Activated T-helper 1 cell treated with anti-CD3 and anti-CD28 coated beads, Interleukin-12 subunit alpha, Interleukin-12 subunit beta, Interleukin-2, Interleukin-4 antibody, amounts not matched to agents 30 ng/mL and 10 ng/mL and 1 ng/mL, durations not matched to agents 14 hours and 24 hours and 36 hours (primary cell): ENCODE measurements at regions of chr9 and their contacts with region 1.

Region 1: GRCh38 chr9:132354637-132355355 is at the start of gene SETX:
- DNase-seq: peak; percentile 91
- H3K4me3 Mint-ChIP-seq: peak within 1 kb of the TSS; percentile 91
- H3K27ac Mint-ChIP-seq: peak within 1 kb of the TSS; percentile 95
- H3K4me1 Mint-ChIP-seq: peaks cover 46% of the 10 kb centered on the region
- H3K27me3 Mint-ChIP-seq: peaks cover 3% of the 10 kb centered on the region
- total RNA-seq, gene SETX: 47.4 and 49.6 TPM in 2 replicates

Region 2: DNA sequence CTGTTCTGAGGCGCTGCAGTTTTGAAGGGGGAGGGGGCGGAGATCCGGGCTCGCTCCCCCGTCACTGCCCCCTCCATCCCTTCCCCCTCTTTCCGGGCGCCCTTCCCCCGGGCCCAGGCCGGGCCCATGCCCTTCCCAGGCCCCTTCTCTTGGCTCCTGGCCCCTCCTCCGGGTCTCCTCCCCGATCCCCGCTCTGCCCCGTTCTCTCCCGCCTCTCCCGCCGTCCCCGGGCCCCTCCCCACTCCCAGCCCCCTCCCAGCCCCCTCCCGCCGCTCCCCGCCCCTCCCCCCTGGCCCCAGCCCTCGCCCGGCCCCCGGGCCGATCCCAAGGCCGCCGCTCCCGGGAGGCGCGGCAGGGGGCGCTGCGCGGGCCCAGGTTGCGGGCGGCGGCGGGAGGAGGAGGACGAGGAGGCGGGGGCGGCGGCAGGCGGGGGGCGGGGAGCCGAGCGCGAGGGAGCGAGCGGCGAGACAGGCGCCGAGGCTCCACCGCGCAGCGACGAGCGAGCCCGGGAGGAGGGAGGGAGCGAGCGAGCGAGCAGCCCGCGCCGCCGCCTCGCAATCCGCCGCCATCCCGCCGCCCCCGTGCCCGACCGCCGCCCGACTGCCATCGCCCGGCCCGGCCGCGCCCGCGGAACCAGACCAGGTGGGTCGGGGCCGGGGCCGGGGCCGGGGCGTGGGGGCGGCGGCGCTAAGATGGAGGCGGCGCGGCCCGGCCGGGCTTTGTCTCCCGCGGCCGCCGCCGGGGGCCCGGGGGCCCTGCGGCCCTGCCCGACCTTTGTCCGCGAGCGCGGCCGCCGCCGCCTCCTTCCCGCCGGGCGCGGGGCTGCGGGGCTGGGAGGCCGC is 961.0 kb before region 1 on chr9 and contains the start of gene PRRC2B:
- intact Hi-C with region 1: loop called (anchors 10 kb)
- DNase-seq: peak; percentile 76
- H3K4me3 Mint-ChIP-seq: peak within 1 kb of the TSS; percentile 89
- H3K27ac Mint-ChIP-seq: peak within 1 kb of the TSS; percentile 93
- H3K4me1 Mint-ChIP-seq: peaks cover 49% of the 10 kb centered on the region
- H3K27me3 Mint-ChIP-seq: peaks cover 21% of the 10 kb centered on the region
- total RNA-seq, gene PRRC2B: 103 and 108 TPM in 2 replicates

Region 3: DNA sequence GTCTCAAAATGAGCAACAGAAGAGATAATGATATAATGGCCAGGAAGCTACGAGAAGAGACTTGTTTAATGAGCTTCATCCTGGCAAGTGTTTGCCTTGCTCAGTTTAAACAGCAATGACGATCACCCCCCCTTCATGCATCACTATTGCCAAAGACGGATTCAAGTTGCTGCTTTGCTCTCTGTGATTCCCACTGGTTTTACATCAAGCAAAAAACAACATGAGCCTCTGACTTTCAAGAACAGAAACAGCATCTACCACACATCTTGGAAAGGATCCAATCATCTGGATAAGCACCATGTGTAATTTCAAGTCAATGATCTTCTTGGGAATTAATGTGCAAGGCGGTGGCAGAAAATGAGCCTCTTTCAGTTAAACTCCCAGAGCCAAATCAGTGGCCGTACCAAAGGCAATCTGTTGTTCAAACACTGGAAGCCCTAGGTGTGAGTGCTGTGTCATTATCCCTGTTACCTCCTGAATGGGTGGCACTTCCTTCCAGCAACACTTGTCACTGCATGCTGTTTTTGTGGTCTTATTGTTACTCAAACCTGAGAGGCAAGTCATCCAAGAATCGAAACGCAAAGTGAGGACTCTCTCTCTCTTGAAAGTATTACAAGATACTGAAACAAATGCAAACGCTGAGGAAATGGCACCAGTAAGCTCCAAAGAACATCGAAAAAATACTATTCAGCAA is 348.0 kb before region 1 on chr9:
- intact Hi-C with region 1: loop called (anchors 10 kb)
- DNase-seq: peak; percentile 50
- H3K4me3 Mint-ChIP-seq: peak overlapping the region; percentile 58
- H3K27ac Mint-ChIP-seq: peak overlapping the region; percentile 62
- H3K4me1 Mint-ChIP-seq: peaks cover 66% of the 10 kb centered on the region
- H3K27me3 Mint-ChIP-seq: peaks cover 2% of the 10 kb centered on the region

Region 4: DNA sequence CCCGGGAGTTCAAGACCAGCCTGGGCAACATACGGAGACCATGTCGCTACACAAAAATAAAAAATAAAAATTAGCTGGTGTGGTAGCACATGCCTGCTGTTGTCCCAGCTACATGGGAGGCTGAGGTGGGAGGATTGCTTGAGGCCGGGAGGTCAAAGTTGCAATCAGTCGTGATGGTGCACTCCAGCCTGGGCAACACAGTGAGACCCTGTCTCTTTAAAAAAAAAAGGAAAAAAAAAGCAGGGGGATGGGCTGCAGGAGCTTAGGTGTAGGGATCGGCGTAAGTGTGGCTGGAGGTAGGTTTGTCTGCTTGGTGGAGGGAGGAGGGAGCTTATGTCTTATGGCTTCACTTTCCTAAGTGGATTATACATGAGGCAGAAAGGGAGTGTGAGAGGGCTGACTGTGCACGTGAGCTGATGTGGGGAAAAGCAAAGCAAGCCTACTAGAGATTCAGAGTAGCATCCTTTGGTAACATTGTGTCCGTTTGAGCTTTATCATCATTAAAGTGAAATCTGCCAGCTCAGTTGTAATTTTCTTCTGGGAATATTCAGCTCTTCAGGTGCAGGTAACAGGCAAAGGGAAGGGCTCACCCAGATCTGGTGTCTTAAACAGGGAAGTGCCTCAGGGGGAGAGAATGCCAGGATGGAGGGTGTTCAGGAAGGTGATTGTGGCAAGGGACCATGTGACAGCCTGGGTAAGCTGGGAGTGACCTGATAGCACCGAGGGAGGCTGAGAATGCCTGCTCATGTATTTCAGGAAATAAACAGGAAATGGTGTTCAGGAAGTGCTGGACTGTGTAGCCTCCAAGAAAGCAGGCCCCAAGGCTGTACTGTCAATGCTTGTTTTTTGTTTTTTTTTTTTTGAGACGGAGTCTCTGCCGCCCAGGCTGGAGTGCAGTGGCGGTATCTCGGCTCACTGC is 17.6 kb after region 1 on chr9:
- intact Hi-C with region 1: loop called (anchors 2 kb)
- DNase-seq: no peak
- H3K4me3 Mint-ChIP-seq: peak overlapping the region; percentile 61
- H3K27ac Mint-ChIP-seq: peak overlapping the region; percentile 72
- H3K4me1 Mint-ChIP-seq: peaks cover 18% of the 10 kb centered on the region
- H3K27me3 Mint-ChIP-seq: no peaks in the 10 kb centered on the region

Region 5: GRCh38 chr9:132877824-132878694 is 523.3 kb after region 1 on chr9 and contains the start of gene AK8:
- intact Hi-C with region 1: loop called (anchors 1 kb)
- DNase-seq: peak; percentile 75
- H3K4me3 Mint-ChIP-seq: peak within 1 kb of the TSS; percentile 84
- H3K27ac Mint-ChIP-seq: peak within 1 kb of the TSS; percentile 68
- H3K4me1 Mint-ChIP-seq: peaks cover 27% of the 10 kb centered on the region
- H3K27me3 Mint-ChIP-seq: peaks cover 9% of the 10 kb centered on the region
- total RNA-seq, gene AK8: not detected in 2 replicates

Region 6: GRCh38 chr9:133375724-133376654 is 1021.2 kb after region 1 on chr9 and contains the starts of genes STKLD1 and SURF4:
- intact Hi-C with region 1: loop called (anchors 10 kb)
- DNase-seq: peak; percentile 96
- H3K4me3 Mint-ChIP-seq: peak within 1 kb of the TSS; percentile 99
- H3K27ac Mint-ChIP-seq: peak within 1 kb of the TSS; percentile 99
- H3K4me1 Mint-ChIP-seq: peaks cover 28% of the 10 kb centered on the region
- H3K27me3 Mint-ChIP-seq: no peaks in the 10 kb centered on the region
- total RNA-seq, gene STKLD1: 0.64 and 1.5 TPM in 2 replicates
- total RNA-seq, gene SURF4: 236 and 242 TPM in 2 replicates